MCF 10A (cell line): ENCODE measurements at regions of chr5 and their contacts with region 1.

Region 1: GRCh38 chr5:139856714-139857113 is 61.1 kb downstream of the PSD2 start:
- DNase-seq: no peak
- H3K4me3 Mint-ChIP-seq: no peak overlapping the region
- H3K27ac Mint-ChIP-seq: no peak overlapping the region
- H3K4me1 Mint-ChIP-seq: no peaks in the 10 kb centered on the region
- H3K27me3 Mint-ChIP-seq: no peaks in the 10 kb centered on the region
- CTCF ChIP-seq: no peak

Region 2: DNA sequence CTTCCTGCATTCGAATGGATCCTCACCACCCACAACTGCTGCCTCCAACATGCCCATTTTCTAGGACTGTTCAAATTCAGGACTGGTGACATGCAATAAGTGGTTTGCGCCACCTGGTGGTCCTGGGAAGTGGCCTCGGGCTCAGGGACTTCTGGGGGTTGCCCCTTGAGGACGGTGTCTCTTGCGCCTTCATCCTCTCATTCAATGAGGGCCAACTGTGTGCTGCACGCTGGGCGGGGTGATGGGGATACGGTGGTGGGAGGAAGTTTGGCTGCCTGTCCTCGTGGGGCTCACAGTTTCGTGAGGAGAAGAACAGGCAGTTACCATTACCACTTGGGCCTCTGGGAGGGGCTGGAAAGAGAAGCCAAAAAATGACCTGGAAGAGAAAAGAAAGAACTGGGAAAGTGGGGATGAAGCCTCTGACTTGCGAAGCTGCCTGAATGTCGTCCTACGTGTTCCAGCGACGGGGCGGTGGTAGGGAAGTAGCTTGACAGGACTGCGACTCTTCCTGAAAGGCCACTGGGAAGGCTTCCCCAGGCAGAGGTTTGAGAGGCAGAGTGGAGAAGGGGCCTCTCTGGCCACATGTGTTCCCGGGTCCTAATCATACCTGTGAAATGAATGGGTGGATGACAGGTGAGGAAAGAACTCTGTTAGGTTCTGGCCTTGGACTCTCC is 12.1 kb before region 1 on chr5:
- CTCF ChIA-PET with region 1: interaction called, 17 read pairs
- POLR2A ChIA-PET with region 1: no interaction called
- intact Hi-C with region 1: no loop called
- DNase-seq: peak; percentile 82
- H3K4me3 Mint-ChIP-seq: no peak overlapping the region
- H3K27ac Mint-ChIP-seq: no peak overlapping the region
- H3K4me1 Mint-ChIP-seq: peaks cover 3% of the 10 kb centered on the region
- H3K27me3 Mint-ChIP-seq: peaks cover 37% of the 10 kb centered on the region
- CTCF ChIP-seq: peak; percentile 74